ENCODE measurements at regions of chr2 and their contacts with region 1.

Region 1: DNA sequence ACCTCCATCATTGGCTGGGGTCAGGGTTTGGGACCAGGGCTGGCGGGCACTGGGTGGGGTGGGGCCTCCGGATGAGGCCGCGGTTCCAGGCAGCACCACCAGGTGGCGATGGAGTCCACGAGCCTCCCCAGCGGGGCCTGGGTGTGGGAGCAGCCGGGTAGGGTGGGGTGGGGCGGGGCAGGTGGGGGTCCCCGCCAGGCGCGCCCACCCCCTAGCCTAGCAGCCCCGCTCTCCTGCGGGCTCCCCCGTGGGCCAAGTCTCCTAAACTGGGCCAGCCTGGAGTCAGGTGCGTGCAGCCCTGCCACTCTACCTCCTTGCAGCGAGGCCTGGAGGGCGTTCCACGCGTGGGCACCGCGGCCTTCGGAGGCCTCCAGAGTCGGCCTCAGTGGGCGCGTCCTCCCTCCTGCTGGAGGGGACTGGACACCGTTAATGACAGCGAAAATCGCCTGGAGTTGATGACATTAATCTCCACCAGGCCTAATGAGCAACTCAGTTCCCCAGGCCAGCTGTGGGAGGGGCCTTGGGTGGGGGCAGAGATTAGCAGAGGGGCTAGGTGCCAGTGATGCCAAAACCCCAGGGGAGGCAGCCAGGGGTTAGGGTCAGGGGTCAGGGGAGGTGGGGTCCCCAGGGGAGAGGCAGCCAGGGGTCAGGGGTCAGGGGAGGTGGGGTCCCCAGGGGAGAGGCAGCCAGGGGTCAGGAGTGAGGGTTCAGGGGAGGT is 187.6 kb downstream of the TWIST2 start:
- DNase-seq: no peak
- H3K4me3 ChIP-seq: no peak overlapping the region
- H3K27ac ChIP-seq: no peak overlapping the region
- H3K4me1 ChIP-seq: no peaks in the 10 kb centered on the region
- H3K27me3 ChIP-seq: no peaks in the 10 kb centered on the region
- CTCF ChIP-seq: peak; percentile 65 to 92 (median 78)
- POLR2A ChIP-seq: no peak

Region 2: DNA sequence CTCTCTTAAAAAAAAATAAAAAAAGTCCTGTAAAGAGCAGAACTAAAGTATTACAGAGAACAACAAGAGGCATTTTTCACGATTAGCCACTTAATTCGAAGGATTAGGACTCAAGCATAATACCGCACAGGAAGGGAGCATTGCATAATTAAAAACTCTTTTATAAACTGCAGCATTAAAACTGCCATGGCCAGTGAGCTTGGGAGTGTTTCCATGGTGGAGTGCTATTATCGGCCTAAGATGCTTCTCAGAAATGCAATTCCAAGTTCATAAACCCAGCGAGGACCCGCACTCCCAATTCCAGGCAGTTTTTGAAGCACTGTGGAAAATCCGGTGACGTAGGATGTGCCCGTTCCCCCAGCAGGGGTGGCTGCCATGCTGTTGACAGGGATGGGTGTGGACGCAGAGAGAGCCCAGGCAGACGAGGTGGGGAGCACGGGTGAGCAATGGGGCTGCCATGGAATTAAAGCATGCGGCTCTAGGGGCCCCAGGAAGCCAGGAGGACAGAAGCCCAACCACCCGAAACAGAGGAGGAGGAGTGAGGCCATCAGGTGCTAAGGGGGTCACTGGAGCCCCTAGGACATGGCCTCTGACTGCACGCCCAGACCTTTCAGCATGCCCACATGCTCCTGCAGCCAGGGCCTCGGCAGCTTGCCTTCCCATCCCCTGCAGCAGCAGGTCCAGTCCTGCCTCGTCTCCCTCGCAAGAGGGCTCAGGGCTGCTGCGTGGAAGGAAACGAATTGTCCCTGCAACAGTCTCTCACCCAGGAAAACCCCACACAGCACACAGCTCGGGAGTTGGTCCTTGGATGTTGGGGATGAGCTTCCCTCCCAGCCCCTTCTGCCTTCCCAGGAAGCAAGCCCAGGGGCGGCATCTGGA is 756.2 kb after region 1 on chr2:
- intact Hi-C with region 1: no loop called
- DNase-seq: no peak
- H3K4me3 ChIP-seq: no peak overlapping the region
- H3K27ac ChIP-seq: no peak overlapping the region
- H3K4me1 ChIP-seq: no peaks in the 10 kb centered on the region
- H3K27me3 ChIP-seq: no peaks in the 10 kb centered on the region
- CTCF ChIP-seq: no peak
- POLR2A ChIP-seq: no peak

Region 3: GRCh38 chr2:239882331-239882732 is 846.8 kb after region 1 on chr2:
- intact Hi-C with region 1: loop called (anchors 10 kb)
- DNase-seq: peak; percentile 63
- H3K4me3 ChIP-seq: no peak overlapping the region
- H3K27ac ChIP-seq: no peak overlapping the region
- H3K4me1 ChIP-seq: no peaks in the 10 kb centered on the region
- H3K27me3 ChIP-seq: no peaks in the 10 kb centered on the region
- CTCF ChIP-seq: peak; percentile 58 to 77 (median 67)
- POLR2A ChIP-seq: no peak

Region 4: GRCh38 chr2:239979243-239980023 is 943.9 kb after region 1 on chr2:
- intact Hi-C with region 1: loop called (anchors 10 kb)
- DNase-seq: no peak
- H3K4me3 ChIP-seq: no peak overlapping the region
- H3K27ac ChIP-seq: no peak overlapping the region
- H3K4me1 ChIP-seq: no peaks in the 10 kb centered on the region
- H3K27me3 ChIP-seq: no peaks in the 10 kb centered on the region
- CTCF ChIP-seq: peak in 2 of 4 experiments; percentile 28 to 46
- POLR2A ChIP-seq: no peak

Region 5: DNA sequence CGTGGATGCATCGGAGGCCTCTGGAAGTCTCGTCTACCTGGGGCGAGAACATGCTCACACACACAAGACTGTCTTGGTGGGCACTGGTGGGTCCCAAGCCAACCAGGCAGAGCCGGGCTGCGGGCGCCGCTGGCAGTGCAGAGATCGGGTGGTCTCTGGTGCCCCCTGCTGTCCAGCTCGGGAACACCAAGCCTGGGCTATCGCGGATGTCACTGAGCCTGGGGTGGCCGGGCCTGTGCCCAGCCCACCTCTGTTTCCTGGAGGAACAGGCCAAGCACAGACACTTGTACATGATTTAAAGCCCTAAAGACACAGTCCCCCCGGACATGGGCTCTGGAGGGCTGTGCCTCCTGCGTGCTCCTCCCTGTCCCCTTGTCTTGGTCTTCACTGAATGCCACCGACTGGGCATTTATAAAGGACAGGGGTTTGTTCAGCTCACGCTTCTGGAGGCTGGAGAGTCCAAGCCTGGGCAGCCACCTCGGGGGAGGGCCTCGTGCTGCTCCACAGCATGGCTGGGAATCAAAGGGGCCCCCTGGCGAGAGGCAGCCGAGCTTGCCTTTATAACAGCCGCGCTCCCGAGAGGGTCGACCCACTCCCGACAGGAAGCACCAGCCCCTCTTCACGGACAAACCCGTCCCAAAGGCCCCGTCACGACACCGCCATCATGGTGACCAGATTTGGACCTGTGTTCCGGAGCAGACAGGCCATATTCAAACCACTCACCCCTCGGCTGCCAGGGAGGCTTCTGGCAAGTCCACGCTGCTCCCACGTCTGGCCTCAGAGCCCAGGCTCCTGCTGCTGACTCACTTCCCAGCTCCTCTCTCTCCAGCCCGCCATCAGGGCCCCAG is 1108.5 kb after region 1 on chr2:
- intact Hi-C with region 1: loop called (anchors 5 kb)
- DNase-seq: peak; percentile 40
- H3K4me3 ChIP-seq: no peak overlapping the region
- H3K27ac ChIP-seq: no peak overlapping the region
- H3K4me1 ChIP-seq: no peaks in the 10 kb centered on the region
- H3K27me3 ChIP-seq: no peaks in the 10 kb centered on the region
- CTCF ChIP-seq: peak; percentile 89 to 97 (median 93)
- POLR2A ChIP-seq: no peak

Region 6: DNA sequence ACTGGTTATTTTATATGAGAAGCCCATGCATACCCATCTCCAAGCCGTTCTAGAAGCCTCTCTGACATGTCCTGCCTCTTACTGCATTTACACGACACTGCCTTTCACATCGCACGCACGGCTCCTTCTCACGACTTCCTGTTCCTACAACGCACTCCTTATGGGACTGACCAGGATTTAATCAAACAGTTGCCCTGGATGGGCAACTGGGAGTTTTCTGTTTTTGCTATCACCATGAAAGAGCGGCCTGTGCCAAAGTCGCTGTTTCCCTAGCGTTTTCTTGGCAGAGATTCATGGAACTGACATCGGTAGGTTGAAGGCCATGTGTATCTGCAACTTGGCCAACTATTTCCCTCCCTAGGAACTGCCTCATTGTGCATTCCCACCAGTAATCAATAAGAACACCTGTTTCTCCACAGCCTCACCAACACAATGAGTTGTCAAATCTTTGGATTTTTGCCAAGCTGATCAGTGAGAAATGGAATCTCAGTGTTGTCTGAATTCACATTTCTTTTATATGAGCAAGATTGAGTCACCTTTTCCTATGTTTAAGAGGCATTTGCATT is 1202.2 kb after region 1 on chr2:
- intact Hi-C with region 1: no loop called
- DNase-seq: no peak
- H3K4me3 ChIP-seq: no peak overlapping the region
- H3K27ac ChIP-seq: peak overlapping the region in 1 of 2 donors; percentile 62
- H3K4me1 ChIP-seq: no peaks in the 10 kb centered on the region
- H3K27me3 ChIP-seq: no peaks in the 10 kb centered on the region
- CTCF ChIP-seq: no peak
- POLR2A ChIP-seq: no peak

Measured in prostate gland (tissue), 2 donors.